Gastrocnemius medialis (tissue), 4 donors: ENCODE measurements at regions of chr10 and their contacts with region 1.

Region 1: GRCh38 chr10:58189269-58189668 is 78.4 kb downstream of the IPMK start:
- DNase-seq: peak; percentile 51 to 53
- ATAC-seq: peak; percentile 95 to 98
- H3K4me3 ChIP-seq: no peak overlapping the region
- H3K27ac ChIP-seq: peak overlapping the region; percentile 65 to 75 (median 66)
- H3K4me1 ChIP-seq: peaks cover 15 to 19% of the 10 kb centered on the region in 2 donors
- H3K27me3 ChIP-seq: no peaks in the 10 kb centered on the region
- CTCF ChIP-seq: no peak
- POLR2A ChIP-seq: peak in 1 of 2 donors; percentile 14

Region 2: GRCh38 chr10:58115218-58116052 is 73.8 kb before region 1 on chr10:
- in situ Hi-C with region 1: no loop called
- intact Hi-C with region 1: no loop called
- DNase-seq: no peak
- ATAC-seq: no peak
- H3K4me3 ChIP-seq: no peak overlapping the region
- H3K27ac ChIP-seq: no peak overlapping the region
- H3K4me1 ChIP-seq: no peaks in the 10 kb centered on the region
- H3K27me3 ChIP-seq: no peaks in the 10 kb centered on the region
- CTCF ChIP-seq: no peak
- POLR2A ChIP-seq: no peak

Region 3: GRCh38 chr10:58282615-58283014 is 93.3 kb after region 1 on chr10:
- in situ Hi-C with region 1: loop called in 3 of 4 experiments (anchors 5 kb)
- intact Hi-C with region 1: no loop called
- DNase-seq: no peak
- ATAC-seq: no peak
- H3K4me3 ChIP-seq: no peak overlapping the region
- H3K27ac ChIP-seq: no peak overlapping the region
- H3K4me1 ChIP-seq: peaks cover 0 to 5% of the 10 kb centered on the region in 2 donors
- H3K27me3 ChIP-seq: no peaks in the 10 kb centered on the region
- CTCF ChIP-seq: no peak
- POLR2A ChIP-seq: no peak